AG04450 (cell line): ENCODE measurements at regions of chr3 and their contacts with region 1.

Region 1: DNA sequence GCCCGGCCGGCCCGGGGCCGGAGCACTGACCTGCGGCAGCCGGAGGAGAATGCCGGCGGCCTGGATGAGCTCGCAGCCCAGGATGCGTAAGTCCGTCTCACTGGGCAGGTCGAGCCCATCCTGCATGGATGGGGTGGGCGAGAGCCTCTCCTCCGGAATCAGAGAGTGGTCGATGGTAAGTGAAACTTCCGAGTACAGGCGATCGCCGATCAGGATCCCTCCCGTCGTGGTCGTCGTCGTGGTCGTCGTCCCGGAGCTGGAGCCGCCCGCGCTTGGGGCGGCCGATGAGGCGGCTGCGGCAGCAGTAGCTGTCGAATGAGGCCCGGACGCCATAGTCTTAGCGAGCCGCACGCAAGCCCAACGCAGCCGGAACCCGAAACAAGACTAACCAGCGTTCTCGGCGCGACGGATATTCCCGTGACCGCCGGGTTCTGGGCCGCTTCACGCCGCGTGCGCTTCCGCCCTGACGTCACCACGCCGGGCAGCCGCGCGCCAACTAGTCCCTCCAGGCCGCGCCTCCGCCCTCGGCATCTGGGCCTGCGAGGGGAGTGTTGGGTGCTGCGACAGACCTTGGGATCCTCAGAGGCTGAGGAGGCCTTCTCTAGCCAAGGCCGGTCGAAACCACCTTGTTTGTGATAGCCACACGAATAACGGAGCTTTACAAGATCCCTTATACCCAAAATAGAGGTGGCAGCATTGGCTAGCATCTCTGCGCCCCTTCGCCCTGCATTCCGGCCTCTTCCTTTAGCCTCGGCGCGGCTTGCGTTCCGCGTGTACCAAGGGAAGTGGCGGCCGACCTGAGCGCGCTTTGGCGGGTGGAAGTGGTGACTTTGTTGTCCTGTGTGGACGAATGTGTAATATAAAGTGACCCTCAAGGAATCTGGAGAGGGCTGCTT is at the start of gene CCNL1:
- DNase-seq: peak; percentile 96
- H3K4me3 ChIP-seq: peak within 1 kb of the TSS; percentile 94
- H3K27ac ChIP-seq: peak within 1 kb of the TSS; percentile 100
- H3K27me3 ChIP-seq: no peaks in the 10 kb centered on the region
- CTCF ChIP-seq: no peak
- polyA plus RNA-seq, gene CCNL1: 113 and 145 TPM in 2 replicates

Region 2: DNA sequence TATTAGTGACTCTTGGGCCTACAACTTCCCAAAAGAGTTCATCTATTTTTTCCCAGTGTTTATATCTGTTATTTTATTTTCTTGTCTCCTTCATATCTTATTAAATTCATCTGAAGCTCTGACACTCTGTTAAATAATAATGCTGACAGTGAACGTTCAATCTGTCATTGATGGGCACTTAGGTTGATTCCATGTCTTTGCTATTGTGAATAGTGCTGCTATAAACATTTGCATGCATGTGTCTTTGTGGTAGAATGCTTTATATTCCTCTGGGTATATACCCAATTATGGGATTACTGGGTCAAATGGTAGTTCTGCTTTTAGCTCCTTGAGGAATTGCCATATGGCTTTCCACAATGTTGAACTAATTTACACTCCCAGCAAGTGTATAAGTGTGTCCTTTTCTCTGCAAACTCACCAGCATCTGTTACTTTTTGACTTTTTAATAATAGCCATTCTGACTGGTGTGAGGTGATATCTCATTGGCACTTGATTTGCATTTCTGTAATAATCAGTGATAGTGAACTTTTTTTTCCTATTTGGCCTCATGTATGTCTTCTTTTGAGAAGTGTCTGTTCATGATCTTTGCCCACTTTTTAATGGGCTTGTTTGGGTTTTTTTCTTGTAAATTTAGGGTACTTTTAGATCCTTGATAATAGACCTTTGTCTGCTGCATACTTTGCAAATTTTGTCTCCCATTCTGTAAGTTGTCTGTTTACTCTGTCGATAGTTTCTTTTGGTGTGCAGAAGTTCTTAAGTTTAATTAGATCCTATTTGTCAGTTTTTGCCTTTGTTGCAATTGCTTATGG is 211.4 kb before region 1 on chr3:
- CTCF ChIA-PET with region 1: no interaction called
- POLR2A ChIA-PET with region 1: no interaction called
- DNase-seq: no peak
- H3K4me3 ChIP-seq: no peak overlapping the region
- H3K27ac ChIP-seq: no peak overlapping the region
- H3K27me3 ChIP-seq: no peaks in the 10 kb centered on the region
- CTCF ChIP-seq: no peak

Region 3: DNA sequence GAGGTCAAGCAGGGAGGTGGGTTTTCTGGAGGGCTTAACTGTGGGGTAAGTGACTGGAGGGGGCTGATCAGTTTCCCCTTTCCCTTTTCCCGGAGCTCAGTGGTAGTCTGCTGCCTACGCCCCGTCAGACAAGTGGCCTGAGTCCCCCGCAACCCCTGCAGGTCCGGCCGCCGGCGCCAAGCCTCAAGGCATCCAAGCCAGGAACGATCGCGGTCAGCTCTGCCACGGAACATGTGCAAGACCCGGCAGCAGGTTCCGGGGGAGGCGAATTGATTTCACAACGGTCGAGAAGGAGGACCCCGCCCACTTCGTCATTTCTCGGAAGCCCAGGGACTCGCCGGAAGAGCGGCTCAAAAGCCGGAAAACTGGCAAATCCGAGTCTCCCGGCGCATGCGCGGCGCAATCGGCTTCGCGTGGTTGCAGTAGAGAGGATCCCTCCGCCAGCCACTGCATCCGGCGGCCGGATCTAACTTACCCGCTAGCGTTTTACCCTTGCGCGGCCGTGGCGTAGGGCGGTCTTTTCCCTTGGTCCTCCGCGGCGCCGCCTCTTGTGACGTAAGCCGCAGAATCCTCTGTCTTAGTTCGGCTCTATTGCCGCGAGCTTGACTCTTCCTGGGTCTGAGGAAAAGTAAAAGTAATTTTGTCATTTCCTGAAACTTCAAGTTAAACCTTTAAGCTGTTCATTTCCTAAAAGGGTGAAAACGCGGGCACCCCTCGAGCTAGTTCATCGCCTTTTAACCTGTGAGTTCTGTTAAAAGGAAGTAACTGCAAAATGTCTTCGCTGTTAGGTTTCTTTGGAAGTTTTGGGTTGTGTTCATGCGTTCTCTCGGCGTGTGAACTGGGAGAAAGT is 14.9 kb after region 1 on chr3:
- CTCF ChIA-PET with region 1: interaction called, 5 read pairs
- POLR2A ChIA-PET with region 1: interaction called, 118 read pairs
- DNase-seq: peak; percentile 100
- H3K4me3 ChIP-seq: peak overlapping the region; percentile 77
- H3K27ac ChIP-seq: peak overlapping the region; percentile 98
- H3K27me3 ChIP-seq: no peaks in the 10 kb centered on the region
- CTCF ChIP-seq: no peak

Region 4: DNA sequence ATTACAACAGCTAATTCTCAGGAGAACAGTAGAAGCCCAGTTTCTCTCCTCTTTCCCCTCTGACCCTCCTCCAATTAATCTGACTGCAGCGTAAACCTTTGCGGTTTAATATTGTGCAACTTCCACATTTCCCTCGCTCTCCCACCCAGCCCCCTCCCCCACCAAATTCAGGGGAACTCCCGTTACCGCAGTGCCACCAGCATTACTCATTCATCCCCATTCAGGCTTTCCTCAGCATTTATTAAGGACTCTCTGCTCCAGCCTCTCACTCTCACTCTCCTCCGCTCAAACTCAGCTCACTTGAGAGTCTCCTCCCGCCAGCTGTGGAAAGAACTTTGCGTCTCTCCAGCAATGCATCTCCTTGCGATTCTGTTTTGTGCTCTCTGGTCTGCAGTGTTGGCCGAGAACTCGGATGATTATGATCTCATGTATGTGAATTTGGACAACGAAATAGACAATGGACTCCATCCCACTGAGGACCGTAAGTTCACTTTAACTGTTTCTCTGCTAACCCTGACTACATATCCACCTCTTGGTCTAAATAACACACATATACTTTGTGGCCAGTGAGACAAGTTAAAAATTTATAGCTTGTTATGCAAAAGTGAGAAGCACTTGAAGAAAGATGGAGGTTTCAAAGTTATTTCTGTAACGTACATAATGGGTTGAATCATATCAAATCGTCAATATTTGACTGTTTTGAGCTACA is 276.7 kb after region 1 on chr3 and contains the start of gene PTX3:
- CTCF ChIA-PET with region 1: no interaction called
- POLR2A ChIA-PET with region 1: interaction called, 13 read pairs
- DNase-seq: peak; percentile 81
- H3K4me3 ChIP-seq: peak within 1 kb of the TSS; percentile 75
- H3K27ac ChIP-seq: peak within 1 kb of the TSS; percentile 47
- H3K27me3 ChIP-seq: no peaks in the 10 kb centered on the region
- CTCF ChIP-seq: no peak
- polyA plus RNA-seq, gene PTX3: 210 and 235 TPM in 2 replicates